Mucosa of descending colon (tissue), 3 donors: ENCODE measurements at regions of chr9 and their contacts with region 1.

Region 1: DNA sequence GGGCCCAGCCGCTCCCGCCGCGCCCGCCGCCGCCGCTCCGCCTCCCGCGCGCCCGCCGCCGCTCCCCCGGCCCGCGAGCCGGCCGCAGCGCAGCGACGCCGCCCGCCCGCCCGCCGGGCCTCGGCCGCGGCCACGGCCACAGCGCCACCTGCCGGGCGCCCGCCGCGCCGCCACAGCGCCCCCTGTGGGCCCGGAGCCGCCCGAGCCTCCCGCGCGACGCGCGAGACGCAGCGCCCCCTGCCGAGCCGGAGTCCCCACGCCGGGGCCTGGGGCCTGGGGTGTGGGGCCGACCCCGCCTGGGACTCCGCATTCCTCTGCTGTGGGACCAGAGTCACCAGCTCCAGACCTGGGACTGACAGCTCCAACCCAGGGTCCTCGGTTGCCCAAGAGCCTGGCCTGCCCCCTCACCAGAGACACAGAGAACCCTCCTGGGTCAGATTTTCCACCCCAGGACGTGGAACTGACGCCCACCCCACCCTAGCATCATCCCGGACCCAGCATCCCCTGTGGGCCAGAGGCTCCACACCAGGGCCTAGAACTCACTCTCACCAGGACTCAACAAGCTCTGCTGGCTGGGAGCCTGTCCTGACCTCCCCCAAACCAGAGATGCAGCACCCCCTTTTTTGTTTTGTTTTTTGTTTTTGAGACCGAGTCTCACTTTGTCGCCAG is at the start of gene RAPGEF1:
- DNase-seq: peak; percentile 73 to 88 (median 83)
- ATAC-seq: peak; percentile 87
- H3K4me3 ChIP-seq: peak within 1 kb of the TSS; percentile 50
- H3K4me1 ChIP-seq: peaks cover 36% of the 10 kb centered on the region
- CTCF ChIP-seq: peak; percentile 98
- total RNA-seq, gene RAPGEF1: 67.1 to 103 (median 84.2) TPM

Region 2: DNA sequence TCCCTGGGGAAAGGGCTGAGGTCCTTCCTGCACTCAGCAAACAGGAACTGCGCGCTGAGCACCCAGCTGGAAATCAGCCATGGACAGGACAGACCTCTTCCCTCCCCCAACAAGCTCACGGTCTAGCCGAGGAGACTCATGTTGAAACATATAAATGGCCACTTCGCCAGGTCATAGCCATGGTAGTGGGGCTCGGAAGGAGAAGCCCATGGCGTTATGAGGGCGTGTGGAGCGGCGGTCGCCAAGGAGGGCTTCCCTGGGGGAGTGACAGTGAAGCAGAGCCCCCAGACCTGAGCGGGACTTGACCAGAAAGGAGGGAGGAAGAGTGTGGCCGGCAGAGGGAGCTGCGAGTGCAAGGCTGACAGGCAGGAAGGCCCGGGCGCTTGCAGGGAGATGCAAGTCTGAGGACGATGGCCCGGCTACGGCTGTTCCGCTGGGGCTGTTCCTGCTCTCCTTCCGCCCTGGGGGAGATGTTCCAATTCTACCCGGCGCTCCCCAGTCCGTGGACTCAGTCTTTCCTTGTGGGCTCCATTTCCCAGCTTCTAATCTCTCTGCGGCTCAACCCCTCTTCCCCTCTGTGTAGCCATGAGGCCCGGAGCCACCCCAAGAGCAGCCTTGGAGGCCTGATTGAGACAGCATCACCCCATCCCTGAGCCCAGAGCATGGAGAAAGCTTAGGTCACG is 390.1 kb before region 1 on chr9:
- intact Hi-C with region 1: loop called in 1 of 2 experiments (anchors 10 kb)
- DNase-seq: peak; percentile 89 to 95 (median 90)
- ATAC-seq: peak; percentile 98
- H3K4me3 ChIP-seq: no peak overlapping the region
- H3K4me1 ChIP-seq: peaks cover 5% of the 10 kb centered on the region
- CTCF ChIP-seq: peak; percentile 54

Region 3: DNA sequence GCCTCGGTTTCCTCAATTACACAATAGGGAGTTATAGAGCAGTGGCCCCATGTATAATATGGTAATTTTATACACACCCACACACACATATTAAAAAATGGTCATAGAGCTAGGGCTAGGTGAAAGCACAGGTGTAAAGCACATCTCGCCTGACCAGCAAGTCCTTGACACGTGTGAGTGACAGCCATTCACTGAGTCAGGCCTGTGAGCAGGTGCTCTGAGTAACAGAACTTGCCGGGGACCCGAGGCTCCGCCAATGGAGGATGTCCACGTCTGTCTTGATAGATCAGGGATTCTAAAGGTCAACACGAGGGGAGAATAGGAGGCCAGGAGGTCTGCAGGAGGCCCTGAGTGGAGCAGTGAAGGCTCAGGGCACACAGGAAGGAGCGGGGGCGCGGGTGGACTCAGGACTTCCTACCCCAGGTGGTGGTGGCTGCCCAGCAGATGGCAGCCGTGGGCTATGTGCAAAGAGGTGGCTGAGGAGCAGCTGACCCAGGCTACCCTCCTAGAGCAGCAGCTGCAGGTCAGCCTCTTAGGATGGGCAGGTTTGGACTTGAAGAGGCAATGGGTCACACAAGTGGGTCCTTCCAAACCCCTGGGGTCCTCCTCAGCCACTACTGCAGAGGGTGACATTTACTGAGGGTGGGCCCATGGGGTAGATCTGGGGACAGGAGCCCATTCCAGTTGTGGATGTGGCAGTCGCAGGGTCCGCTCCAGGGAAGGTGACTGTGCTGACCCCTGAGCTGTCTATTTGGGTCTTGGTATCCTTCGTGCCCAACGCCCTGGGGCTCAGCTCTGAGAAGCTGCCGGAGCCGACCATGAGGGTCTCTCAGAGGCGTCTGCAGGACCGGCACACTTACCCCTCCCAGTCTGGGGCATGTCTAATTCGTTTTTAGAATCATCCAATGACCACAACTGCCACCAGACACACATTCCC is 148.9 kb before region 1 on chr9:
- intact Hi-C with region 1: loop called (anchors 5 kb)
- DNase-seq: peak; percentile 86 to 88 (median 87)
- ATAC-seq: peak; percentile 92
- H3K4me3 ChIP-seq: no peak overlapping the region
- H3K4me1 ChIP-seq: no peaks in the 10 kb centered on the region
- CTCF ChIP-seq: peak; percentile 45

Region 4: GRCh38 chr9:131678499-131679111 is 61.5 kb before region 1 on chr9:
- intact Hi-C with region 1: loop called in 1 of 2 experiments (anchors 10 kb)
- DNase-seq: peak; percentile 62 to 86 (median 64)
- ATAC-seq: peak; percentile 87
- H3K4me3 ChIP-seq: no peak overlapping the region
- H3K4me1 ChIP-seq: peaks cover 29% of the 10 kb centered on the region
- CTCF ChIP-seq: no peak

Region 5: GRCh38 chr9:132575005-132575609 is 835.0 kb after region 1 on chr9:
- intact Hi-C with region 1: no loop called
- DNase-seq: peak; percentile 64 to 84 (median 73)
- ATAC-seq: peak; percentile 95
- H3K4me3 ChIP-seq: no peak overlapping the region
- H3K4me1 ChIP-seq: no peaks in the 10 kb centered on the region
- CTCF ChIP-seq: peak; percentile 31